ENCODE measurements at regions of chr1 and their contacts with region 1.

Region 1: GRCh38 chr1:224329842-224330753 is at the start of gene NVL:
- DNase-seq: peak; percentile 90
- H3K4me3 ChIP-seq: peak within 1 kb of the TSS; percentile 69 to 87 (median 85)
- H3K27ac ChIP-seq: peak within 1 kb of the TSS; percentile 91
- H3K4me1 ChIP-seq: peaks cover 19% of the 10 kb centered on the region
- H3K27me3 ChIP-seq: no peaks in the 10 kb centered on the region
- CTCF ChIP-seq: no peak
- POLR2A ChIP-seq: peak; percentile 85
- total RNA-seq, gene NVL: 30.3 and 35.6 TPM in 2 replicates

Region 2: GRCh38 chr1:223796210-223796609 is 533.9 kb before region 1 on chr1:
- CTCF ChIA-PET with region 1: no interaction called
- POLR2A ChIA-PET with region 1: no interaction called
- dilution Hi-C with region 1: no loop called
- intact Hi-C with region 1: loop called (anchors 5 kb)
- DNase-seq: no peak
- H3K4me3 ChIP-seq: no peak overlapping the region
- H3K27ac ChIP-seq: no peak overlapping the region
- H3K4me1 ChIP-seq: no peaks in the 10 kb centered on the region
- H3K27me3 ChIP-seq: no peaks in the 10 kb centered on the region
- CTCF ChIP-seq: no peak
- POLR2A ChIP-seq: no peak

Region 3: GRCh38 chr1:224052772-224053171 is 277.3 kb before region 1 on chr1:
- CTCF ChIA-PET with region 1: interaction called, 6 read pairs
- POLR2A ChIA-PET with region 1: no interaction called
- dilution Hi-C with region 1: no loop called
- intact Hi-C with region 1: loop called (anchors 1 kb)
- DNase-seq: peak; percentile 96
- H3K4me3 ChIP-seq: no peak overlapping the region
- H3K27ac ChIP-seq: peak overlapping the region; percentile 92
- H3K4me1 ChIP-seq: peaks cover 37% of the 10 kb centered on the region
- H3K27me3 ChIP-seq: no peaks in the 10 kb centered on the region
- CTCF ChIP-seq: no peak
- POLR2A ChIP-seq: peak; percentile 24

Region 4: DNA sequence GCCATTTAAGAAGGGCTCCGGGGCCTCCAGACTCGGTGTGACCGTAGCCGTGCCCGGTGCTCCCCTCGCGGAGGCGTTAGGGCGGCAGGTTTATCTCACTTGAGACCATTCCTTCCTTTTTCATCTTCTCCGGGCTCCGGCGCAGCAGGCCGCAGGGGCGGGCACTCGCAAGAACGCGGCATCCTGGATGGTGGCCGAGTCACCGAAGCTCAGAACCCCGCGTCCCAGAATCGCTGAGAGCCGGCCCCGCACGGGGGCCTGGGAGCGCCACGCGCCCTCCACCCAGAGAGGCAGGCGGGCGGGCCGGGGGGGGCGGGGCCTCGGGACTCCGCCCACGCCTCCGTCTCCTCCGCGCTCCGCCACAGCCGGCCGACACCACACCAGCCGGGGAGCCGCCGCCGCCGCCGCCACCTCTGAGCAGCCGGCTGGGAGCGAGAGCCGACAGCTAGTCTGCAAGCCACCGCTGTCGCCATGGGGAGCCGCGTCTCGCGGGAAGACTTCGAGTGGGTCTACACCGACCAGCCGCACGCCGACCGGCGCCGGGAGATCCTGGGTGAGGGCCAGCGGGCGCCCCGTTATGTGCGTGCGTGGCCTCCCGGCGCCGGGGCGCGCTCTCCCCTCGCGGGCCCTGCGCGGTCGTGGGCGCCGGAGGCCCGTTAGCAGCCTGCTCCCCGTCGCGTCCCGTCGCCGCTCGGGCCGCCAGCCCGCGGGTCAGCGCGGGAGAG is 147.1 kb before region 1 on chr1 and contains the start of gene DEGS1:
- CTCF ChIA-PET with region 1: interaction called, 4 read pairs
- POLR2A ChIA-PET with region 1: no interaction called
- dilution Hi-C with region 1: no loop called
- intact Hi-C with region 1: loop called (anchors 1 kb)
- DNase-seq: peak; percentile 86
- H3K4me3 ChIP-seq: peak within 1 kb of the TSS; percentile 57 to 91 (median 68)
- H3K27ac ChIP-seq: peak within 1 kb of the TSS; percentile 70
- H3K4me1 ChIP-seq: peaks cover 5% of the 10 kb centered on the region
- H3K27me3 ChIP-seq: no peaks in the 10 kb centered on the region
- CTCF ChIP-seq: no peak
- POLR2A ChIP-seq: peak; percentile 81
- total RNA-seq, gene DEGS1: 85.8 and 87.0 TPM in 2 replicates

Region 5: DNA sequence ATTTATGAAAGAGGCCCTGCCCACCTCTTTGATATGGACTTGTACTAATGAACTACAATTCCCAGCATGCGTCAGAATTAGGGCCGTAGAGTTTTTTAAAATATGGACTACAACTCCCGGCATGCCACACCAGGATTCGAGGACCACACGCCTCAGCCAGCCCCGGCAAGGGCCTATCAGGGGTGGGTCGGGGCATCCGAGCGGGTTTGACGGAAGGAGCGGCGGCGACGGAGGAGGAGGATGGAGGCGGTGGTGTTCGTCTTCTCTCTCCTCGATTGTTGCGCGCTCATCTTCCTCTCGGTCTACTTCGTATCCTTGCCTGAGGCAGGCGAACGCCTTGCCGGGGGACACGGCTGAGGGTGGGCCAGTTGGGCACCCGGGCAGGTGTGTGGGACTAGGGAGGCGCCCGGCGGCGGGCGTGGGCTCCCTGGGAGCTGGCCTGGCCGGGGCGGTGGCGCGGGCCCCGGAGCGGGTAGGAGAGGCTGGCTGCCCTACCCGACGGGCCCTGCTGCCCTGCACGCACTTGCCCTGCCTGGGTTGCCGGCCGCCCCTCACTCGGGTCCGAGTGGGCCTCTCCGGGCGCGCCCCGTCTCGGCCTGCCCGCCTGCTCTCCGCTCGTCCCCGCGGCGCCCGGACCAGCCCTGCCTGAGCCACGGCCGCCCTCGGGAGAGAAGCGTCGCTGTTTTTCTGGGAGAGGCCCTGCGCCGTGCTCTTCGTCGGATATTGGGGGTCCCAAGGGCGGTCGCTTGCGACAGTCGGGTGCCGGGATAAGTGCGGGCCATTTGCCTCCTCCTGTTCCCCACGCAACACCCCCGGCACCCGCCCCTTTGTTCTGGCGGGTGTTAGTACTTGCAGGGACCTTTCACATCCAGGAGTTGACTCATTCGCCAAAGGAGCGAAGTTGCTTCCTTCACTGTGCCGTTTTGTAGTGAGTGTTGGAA is 26.9 kb after region 1 on chr1 and contains the start of gene CNIH4:
- CTCF ChIA-PET with region 1: interaction called, 5 read pairs
- POLR2A ChIA-PET with region 1: no interaction called
- dilution Hi-C with region 1: no loop called
- intact Hi-C with region 1: loop called (anchors 1 kb)
- DNase-seq: peak; percentile 95
- H3K4me3 ChIP-seq: peak within 1 kb of the TSS; percentile 67 to 71 (median 69)
- H3K27ac ChIP-seq: peak within 1 kb of the TSS; percentile 42
- H3K4me1 ChIP-seq: peaks cover 10% of the 10 kb centered on the region
- H3K27me3 ChIP-seq: no peaks in the 10 kb centered on the region
- CTCF ChIP-seq: no peak
- POLR2A ChIP-seq: peak; percentile 92
- total RNA-seq, gene CNIH4: 74.9 and 84.8 TPM in 2 replicates